MCF 10A (cell line): ENCODE measurements at regions of chr3 and their contacts with region 1.

Region 1: DNA sequence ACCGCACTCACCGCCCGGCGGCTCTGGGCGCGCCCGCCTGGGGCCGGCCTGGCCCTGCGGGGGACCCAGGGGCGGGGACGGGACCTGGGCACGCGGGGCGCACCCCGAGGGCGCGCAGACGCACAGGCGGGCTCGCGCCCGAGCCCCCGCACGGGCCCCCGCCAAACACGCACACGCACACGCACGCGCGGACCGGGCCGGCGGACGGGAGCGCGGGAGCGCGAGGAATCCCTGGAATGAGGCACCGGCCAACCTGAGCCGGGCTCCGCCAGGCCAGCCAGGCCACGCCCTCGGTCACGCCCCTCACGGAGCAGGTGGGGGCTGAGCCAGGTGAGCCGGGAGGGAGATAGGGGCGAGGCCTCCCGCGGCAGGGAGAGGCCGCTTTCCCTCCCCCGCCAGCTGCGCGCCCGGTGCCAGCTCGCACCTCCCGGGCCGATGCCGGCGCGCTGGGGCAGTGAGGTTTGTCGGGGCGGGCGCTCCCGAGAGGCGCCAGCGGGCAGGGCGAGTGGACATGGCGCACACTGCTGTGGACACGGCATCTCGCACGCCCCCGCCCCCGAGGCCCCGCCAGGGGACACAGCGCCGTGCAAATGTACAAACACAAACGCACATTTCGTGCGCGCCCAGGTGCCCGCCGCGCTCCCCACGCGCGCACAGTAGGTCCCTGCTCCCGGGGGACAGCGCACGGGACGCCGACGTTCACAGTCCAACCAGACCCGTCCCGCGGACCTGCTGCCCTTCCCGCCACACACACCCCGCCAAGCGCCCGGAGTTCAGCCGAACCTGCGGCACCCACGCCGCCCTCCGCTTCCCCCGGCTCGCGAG is 75.9 kb upstream of the VGLL4 start:
- DNase-seq: peak; percentile 88
- H3K4me3 Mint-ChIP-seq: peak overlapping the region; percentile 98
- H3K27ac Mint-ChIP-seq: peak overlapping the region; percentile 94
- H3K4me1 Mint-ChIP-seq: peaks cover 13% of the 10 kb centered on the region
- H3K27me3 Mint-ChIP-seq: peaks cover 4% of the 10 kb centered on the region
- CTCF ChIP-seq: no peak

Region 2: GRCh38 chr3:11568503-11569155 is 151.0 kb before region 1 on chr3:
- CTCF ChIA-PET with region 1: interaction called, 3 read pairs
- POLR2A ChIA-PET with region 1: interaction called, 3 read pairs
- intact Hi-C with region 1: loop called (anchors 2 kb)
- DNase-seq: peak; percentile 86
- H3K4me3 Mint-ChIP-seq: peak overlapping the region; percentile 76
- H3K27ac Mint-ChIP-seq: peak overlapping the region; percentile 99
- H3K4me1 Mint-ChIP-seq: peaks cover 27% of the 10 kb centered on the region
- H3K27me3 Mint-ChIP-seq: no peaks in the 10 kb centered on the region
- CTCF ChIP-seq: no peak

Region 3: DNA sequence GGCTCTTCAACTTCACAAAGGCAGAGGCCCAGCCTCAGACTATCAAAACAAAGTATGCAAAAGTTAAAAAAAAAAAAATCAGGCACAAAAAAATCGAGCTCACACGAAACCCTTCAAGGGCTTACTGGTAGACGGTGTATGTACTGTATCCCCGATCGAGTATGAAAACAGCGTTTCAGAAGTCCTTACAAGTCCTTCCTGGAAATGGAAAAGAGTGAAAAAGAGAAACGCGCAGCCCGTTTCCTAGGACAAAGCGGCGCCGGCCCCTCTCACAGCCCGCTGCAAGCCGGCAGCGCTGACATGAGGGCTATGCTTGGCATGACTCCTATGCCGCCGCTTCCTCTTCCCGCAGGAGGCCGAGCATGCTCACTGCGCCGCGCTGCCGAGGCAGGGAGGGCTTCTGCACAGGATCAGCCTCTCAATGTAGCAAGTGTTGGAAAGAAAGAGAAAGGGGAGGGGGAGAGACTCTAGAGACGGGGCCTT is 76.0 kb before region 1 on chr3 and contains the start of gene VGLL4:
- CTCF ChIA-PET with region 1: no interaction called
- POLR2A ChIA-PET with region 1: interaction called, 11 read pairs
- intact Hi-C with region 1: no loop called
- DNase-seq: peak; percentile 85
- H3K4me3 Mint-ChIP-seq: peak within 1 kb of the TSS; percentile 93
- H3K27ac Mint-ChIP-seq: peak within 1 kb of the TSS; percentile 96
- H3K4me1 Mint-ChIP-seq: peaks cover 21% of the 10 kb centered on the region
- H3K27me3 Mint-ChIP-seq: no peaks in the 10 kb centered on the region
- CTCF ChIP-seq: no peak
- total RNA-seq, gene VGLL4: 31.3 and 31.7 TPM in 2 replicates

Region 4: GRCh38 chr3:11701901-11702300 is 17.7 kb before region 1 on chr3:
- CTCF ChIA-PET with region 1: interaction called, 4 read pairs
- POLR2A ChIA-PET with region 1: interaction called, 10 read pairs
- intact Hi-C with region 1: no loop called
- DNase-seq: no peak
- H3K4me3 Mint-ChIP-seq: no peak overlapping the region
- H3K27ac Mint-ChIP-seq: no peak overlapping the region
- H3K4me1 Mint-ChIP-seq: peaks cover 7% of the 10 kb centered on the region
- H3K27me3 Mint-ChIP-seq: no peaks in the 10 kb centered on the region
- CTCF ChIP-seq: no peak

Region 5: GRCh38 chr3:11791339-11792128 is 71.9 kb after region 1 on chr3:
- CTCF ChIA-PET with region 1: no interaction called
- POLR2A ChIA-PET with region 1: no interaction called
- intact Hi-C with region 1: no loop called
- DNase-seq: no peak
- H3K4me3 Mint-ChIP-seq: no peak overlapping the region
- H3K27ac Mint-ChIP-seq: no peak overlapping the region
- H3K4me1 Mint-ChIP-seq: peaks cover 8% of the 10 kb centered on the region
- H3K27me3 Mint-ChIP-seq: no peaks in the 10 kb centered on the region
- CTCF ChIP-seq: no peak

Region 6: GRCh38 chr3:11803977-11804892 is 84.6 kb after region 1 on chr3:
- CTCF ChIA-PET with region 1: interaction called, 6 read pairs
- POLR2A ChIA-PET with region 1: no interaction called
- intact Hi-C with region 1: loop called (anchors 1 kb)
- DNase-seq: peak; percentile 64
- H3K4me3 Mint-ChIP-seq: no peak overlapping the region
- H3K27ac Mint-ChIP-seq: no peak overlapping the region
- H3K4me1 Mint-ChIP-seq: no peaks in the 10 kb centered on the region
- H3K27me3 Mint-ChIP-seq: no peaks in the 10 kb centered on the region
- CTCF ChIP-seq: peak; percentile 71